ENCODE measurements at regions of chr19 and their contacts with region 1.

Region 1: DNA sequence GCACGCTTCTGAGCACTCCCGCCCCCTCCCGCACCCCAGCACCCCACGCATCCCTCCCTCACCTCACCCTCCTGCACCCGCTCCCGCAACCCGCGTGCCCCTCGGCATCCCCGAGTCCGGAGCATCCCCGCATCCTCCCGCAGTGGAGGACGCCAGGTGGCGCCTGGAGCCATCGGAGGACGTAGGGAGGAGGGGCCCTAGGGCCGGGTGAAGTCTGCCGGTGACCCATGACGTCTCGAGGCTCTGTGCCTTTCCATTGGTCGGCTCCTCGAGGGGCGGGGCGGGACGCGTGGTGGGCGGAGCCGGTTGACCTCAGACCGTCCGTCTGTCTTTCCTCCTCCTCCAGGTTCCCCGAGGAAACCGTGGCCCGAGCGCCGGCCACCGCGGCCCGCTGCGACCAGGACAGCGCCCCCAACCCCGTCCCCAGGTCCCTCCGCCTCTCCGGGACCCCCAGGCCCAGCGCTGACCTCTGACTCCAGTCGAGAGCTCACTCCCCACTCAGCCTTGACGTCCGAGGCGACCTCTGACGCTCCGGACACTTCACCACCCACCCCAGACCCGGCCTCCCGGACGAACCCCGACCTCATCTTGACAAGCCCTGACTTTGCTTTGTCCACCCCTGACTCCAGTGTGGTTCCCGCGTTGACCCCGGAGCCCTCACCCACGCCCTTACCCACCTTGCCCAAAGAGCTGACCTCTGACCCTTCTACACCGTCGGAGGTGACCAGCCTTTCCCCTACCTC is 19.9 kb downstream of the SBK2 start:
- DNase-seq: peak; percentile 96
- ATAC-seq: peak; percentile 98

Region 2: GRCh38 chr19:55418185-55418584 is 98.9 kb before region 1 on chr19:
- intact Hi-C with region 1: no loop called
- DNase-seq: no peak
- ATAC-seq: peak; percentile 80

Region 3: DNA sequence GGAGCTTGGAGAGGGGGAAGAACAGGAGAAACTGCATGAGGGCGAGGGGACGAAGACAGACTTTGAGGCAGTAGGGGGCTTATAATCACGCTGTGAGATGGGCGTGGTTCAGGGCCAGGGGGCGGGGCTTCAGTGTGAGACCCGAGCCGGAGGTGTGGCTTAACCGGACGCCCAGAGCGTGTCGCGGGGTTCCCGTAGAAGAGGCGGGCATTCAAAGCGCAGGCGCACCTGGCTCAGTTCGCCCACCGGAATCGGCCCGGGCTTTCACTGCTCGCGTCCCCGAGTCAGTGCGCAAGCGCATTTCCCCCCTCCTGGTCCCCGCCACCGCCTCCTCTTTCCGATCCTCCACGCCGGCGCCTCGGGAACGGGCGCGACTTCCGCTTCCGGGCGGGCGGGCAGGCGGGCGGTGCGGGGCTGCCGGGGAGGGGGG is 88.2 kb after region 1 on chr19:
- intact Hi-C with region 1: loop called (anchors 5 kb)
- DNase-seq: peak; percentile 99
- ATAC-seq: peak; percentile 88

Region 4: GRCh38 chr19:55624109-55625003 is 107.3 kb after region 1 on chr19 and contains the start of gene ZNF784:
- intact Hi-C with region 1: loop called (anchors 5 kb)
- DNase-seq: peak; percentile 95
- ATAC-seq: peak; percentile 94
- total RNA-seq, gene ZNF784: 11.7 TPM